H1 (cell line): ENCODE measurements at regions of chr19 and their contacts with region 1.

Region 1: DNA sequence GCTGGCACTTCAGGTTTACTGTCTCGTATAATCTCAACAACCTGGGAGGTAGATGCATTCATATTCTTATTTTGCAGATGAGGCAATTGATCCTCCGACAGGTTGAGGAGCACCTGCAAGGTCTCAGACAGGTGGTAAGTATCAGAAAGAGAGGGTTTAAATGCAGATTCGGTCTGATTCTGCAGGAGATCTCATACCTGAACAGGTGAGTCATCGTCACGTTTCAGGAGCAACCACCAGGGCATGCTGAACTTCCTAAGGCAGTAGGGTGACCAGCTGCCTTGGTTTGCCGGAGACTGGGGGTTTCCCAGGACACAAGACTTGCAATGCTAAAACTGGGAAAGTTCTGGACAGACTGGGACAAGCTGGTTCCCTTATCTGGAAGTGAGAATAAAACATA is 68.8 kb upstream of the TSHZ3 start:
- DNase-seq: peak in 1 of 2 experiments; percentile 57
- H3K4me3 ChIP-seq: peak overlapping the region in 1 of 4 experiments; percentile 41; a peak in 1 of 8 replicates
- H3K27ac ChIP-seq: peak overlapping the region; percentile 92; the same call in 1 of the 2 replicates
- H3K4me1 ChIP-seq: peaks cover 14 to 44% (median 36%) of the 10 kb centered on the region in 4 experiments
- H3K27me3 ChIP-seq: no peaks in the 10 kb centered on the region
- CTCF ChIP-seq: peak in 2 of 3 experiments; percentile 22 to 23; a peak in 2 of 4 replicates
- EP300 ChIP-seq: peak in 1 of 2 experiments; percentile 34; a peak in 1 of 3 replicates
- POLR2A ChIP-seq: peak in 1 of 2 experiments; percentile 25; a peak in 2 of 3 replicates
- RAD21 ChIP-seq: peak in 1 of 2 experiments; percentile 27; a peak in 1 of 4 replicates

Region 2: DNA sequence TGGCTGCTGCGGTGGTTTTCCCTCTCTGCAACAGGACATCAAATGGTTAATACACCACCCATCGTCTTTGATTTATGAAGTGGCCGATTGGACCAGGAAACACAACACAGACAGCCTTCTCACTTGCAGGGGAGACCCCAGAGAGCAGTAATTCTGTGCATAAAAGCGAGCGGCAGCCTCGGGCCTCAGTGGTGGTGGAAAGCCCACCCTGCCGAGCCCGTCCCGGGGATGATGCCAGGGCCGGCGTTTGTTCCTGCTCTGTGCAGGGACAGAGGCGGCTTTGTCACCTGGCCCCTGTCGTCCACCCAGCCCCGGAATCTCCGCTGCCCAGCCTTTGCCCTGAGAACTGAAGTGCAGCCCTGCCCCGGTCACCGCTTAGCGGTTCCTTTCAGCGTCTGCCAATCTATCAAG is 253.2 kb before region 1 on chr19:
- CTCF ChIA-PET with region 1: no interaction called
- POLR2A ChIA-PET with region 1: no interaction called
- DNase-seq: no peak
- H3K4me3 ChIP-seq: no peak overlapping the region
- H3K27ac ChIP-seq: no peak overlapping the region
- H3K4me1 ChIP-seq: no peaks in the 10 kb centered on the region
- H3K27me3 ChIP-seq: no peaks in the 10 kb centered on the region
- CTCF ChIP-seq: no peak
- EP300 ChIP-seq: no peak
- POLR2A ChIP-seq: no peak
- RAD21 ChIP-seq: no peak

Region 3: GRCh38 chr19:31326329-31327028 is 91.6 kb before region 1 on chr19:
- CTCF ChIA-PET with region 1: no interaction called
- POLR2A ChIA-PET with region 1: no interaction called
- DNase-seq: no peak
- H3K4me3 ChIP-seq: no peak overlapping the region
- H3K27ac ChIP-seq: no peak overlapping the region
- H3K4me1 ChIP-seq: peaks cover 0 to 9% (median 0%) of the 10 kb centered on the region in 4 experiments; a peak in 2 of 7 replicates
- H3K27me3 ChIP-seq: no peaks in the 10 kb centered on the region
- CTCF ChIP-seq: no peak
- EP300 ChIP-seq: no peak
- POLR2A ChIP-seq: no peak
- RAD21 ChIP-seq: no peak

Region 4: GRCh38 chr19:31351069-31351854 is 66.8 kb before region 1 on chr19:
- CTCF ChIA-PET with region 1: interaction called, 4 read pairs
- POLR2A ChIA-PET with region 1: interaction called, 25 read pairs
- DNase-seq: peak in 1 of 2 experiments; percentile 66
- H3K4me3 ChIP-seq: peak overlapping the region; percentile 57 to 82 (median 70)
- H3K27ac ChIP-seq: no peak overlapping the region
- H3K4me1 ChIP-seq: peaks cover 15 to 36% (median 23%) of the 10 kb centered on the region in 4 experiments
- H3K27me3 ChIP-seq: peaks cover 38 to 75% (median 61%) of the 10 kb centered on the region in 4 experiments; a peak in 6 of 7 replicates
- CTCF ChIP-seq: no peak
- EP300 ChIP-seq: no peak
- POLR2A ChIP-seq: no peak
- RAD21 ChIP-seq: no peak

Region 5: GRCh38 chr19:31378404-31378803 is 39.6 kb before region 1 on chr19:
- CTCF ChIA-PET with region 1: no interaction called
- POLR2A ChIA-PET with region 1: no interaction called
- DNase-seq: no peak
- H3K4me3 ChIP-seq: no peak overlapping the region
- H3K27ac ChIP-seq: no peak overlapping the region
- H3K4me1 ChIP-seq: no peaks in the 10 kb centered on the region
- H3K27me3 ChIP-seq: no peaks in the 10 kb centered on the region
- CTCF ChIP-seq: no peak
- EP300 ChIP-seq: no peak
- POLR2A ChIP-seq: no peak
- RAD21 ChIP-seq: no peak

Region 6: GRCh38 chr19:31392464-31392863 is 25.6 kb before region 1 on chr19:
- CTCF ChIA-PET with region 1: no interaction called
- POLR2A ChIA-PET with region 1: interaction called, 10 read pairs
- DNase-seq: no peak
- H3K4me3 ChIP-seq: no peak overlapping the region
- H3K27ac ChIP-seq: no peak overlapping the region
- H3K4me1 ChIP-seq: peaks cover 0 to 3% (median 1%) of the 10 kb centered on the region in 4 experiments; a peak in 2 of 7 replicates
- H3K27me3 ChIP-seq: no peaks in the 10 kb centered on the region
- CTCF ChIP-seq: no peak
- EP300 ChIP-seq: no peak
- POLR2A ChIP-seq: no peak
- RAD21 ChIP-seq: no peak

Region 7: DNA sequence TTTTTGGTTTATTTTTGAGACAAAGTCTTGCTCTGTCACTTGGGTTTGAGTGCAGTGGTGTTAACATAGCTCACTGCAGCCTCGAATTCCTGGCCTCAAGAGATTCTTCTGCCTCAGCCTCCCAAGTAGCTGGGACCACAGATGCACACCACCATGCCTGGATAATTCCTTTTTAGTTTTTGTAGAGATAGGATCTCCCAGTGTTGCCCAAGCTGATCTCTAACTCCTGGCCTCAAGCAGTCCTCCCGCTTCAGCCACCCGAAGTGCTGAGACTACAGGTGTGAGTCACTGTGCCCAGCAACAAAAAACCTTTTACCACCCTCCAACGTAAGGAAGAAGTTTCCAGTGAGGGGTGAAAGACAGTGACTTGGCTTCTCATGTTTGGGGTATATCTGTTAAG is 12.3 kb after region 1 on chr19:
- CTCF ChIA-PET with region 1: no interaction called
- POLR2A ChIA-PET with region 1: interaction called, 12 read pairs
- DNase-seq: peak in 1 of 2 experiments; percentile 2
- H3K4me3 ChIP-seq: no peak overlapping the region
- H3K27ac ChIP-seq: no peak overlapping the region
- H3K4me1 ChIP-seq: peaks cover 0 to 6% (median 0%) of the 10 kb centered on the region in 4 experiments; a peak in 1 of 7 replicates
- H3K27me3 ChIP-seq: no peaks in the 10 kb centered on the region
- CTCF ChIP-seq: no peak
- EP300 ChIP-seq: no peak
- POLR2A ChIP-seq: no peak
- RAD21 ChIP-seq: no peak

Region 8: GRCh38 chr19:31461814-31462539 is 43.9 kb after region 1 on chr19:
- CTCF ChIA-PET with region 1: interaction called, 4 read pairs
- POLR2A ChIA-PET with region 1: interaction called, 10 read pairs
- DNase-seq: no peak
- H3K4me3 ChIP-seq: no peak overlapping the region
- H3K27ac ChIP-seq: no peak overlapping the region
- H3K4me1 ChIP-seq: no peaks in the 10 kb centered on the region
- H3K27me3 ChIP-seq: no peaks in the 10 kb centered on the region
- CTCF ChIP-seq: peak in 2 of 3 experiments; percentile 8 to 38; a peak in 2 of 4 replicates
- EP300 ChIP-seq: no peak
- POLR2A ChIP-seq: no peak
- RAD21 ChIP-seq: peak; percentile 24 to 45; a peak in 2 of 4 replicates